Colonic mucosa (tissue), 4 donors: ENCODE measurements at regions of chr5 and their contacts with region 1.

Region 1: DNA sequence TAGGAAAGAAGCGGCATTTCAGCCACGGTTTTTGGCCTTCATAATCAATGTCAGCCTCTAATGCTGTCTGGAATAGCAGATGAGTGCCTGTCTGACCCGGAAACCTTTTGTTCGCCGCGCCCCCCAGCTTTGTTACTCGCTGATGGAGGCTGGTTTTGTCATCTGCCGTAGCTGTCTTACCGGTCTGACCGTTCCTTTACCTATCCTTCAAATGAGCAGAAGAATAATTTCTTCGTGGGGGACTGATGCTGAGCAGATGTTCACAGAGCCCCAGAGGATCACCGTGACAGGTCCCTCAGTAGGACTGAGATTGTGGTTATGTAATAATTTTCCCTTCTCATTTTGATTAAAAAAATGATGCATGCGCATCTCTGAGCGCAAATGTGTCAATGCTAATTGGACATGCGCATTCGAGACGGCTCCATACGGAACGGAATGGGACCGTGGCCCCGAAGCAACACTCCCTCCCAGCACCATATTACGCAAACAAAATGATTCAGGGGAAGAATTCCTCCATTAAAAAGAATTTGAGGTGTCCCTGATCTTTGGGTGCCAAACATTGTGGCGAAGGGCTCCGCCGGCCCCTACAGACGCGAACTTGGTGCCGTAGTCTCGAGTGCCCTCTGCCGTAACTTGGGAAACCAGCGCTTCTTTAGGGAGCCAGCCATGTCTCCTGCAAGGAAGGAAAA is 27.6 kb downstream of the TLX3 start:
- DNase-seq: no peak
- H3K4me3 ChIP-seq: peak overlapping the region; percentile 34
- H3K27ac ChIP-seq: no peak overlapping the region
- H3K4me1 ChIP-seq: no peaks in the 10 kb centered on the region
- H3K27me3 ChIP-seq: peaks cover 9% of the 10 kb centered on the region
- CTCF ChIP-seq: peak; percentile 33

Region 2: DNA sequence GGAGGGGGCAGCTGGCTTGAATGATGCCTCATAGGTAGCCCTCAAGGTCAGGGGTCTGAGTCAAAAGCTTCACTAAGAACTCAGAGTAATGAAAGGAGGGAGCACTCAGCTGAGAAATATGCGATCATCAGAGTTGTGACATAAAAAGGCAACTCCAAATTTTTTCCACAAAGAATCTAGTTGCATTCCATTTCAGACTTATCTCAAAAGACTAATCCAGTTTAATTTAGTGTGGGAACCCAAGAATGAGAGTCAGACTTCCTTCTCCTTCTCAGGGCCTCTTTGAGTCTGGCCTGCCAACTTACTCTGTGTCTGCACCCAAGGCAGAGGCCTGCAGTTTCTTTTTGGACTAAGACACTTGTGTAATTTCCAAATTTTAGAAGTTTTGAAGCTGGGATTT is 518.4 kb before region 1 on chr5:
- intact Hi-C with region 1: no loop called
- DNase-seq: no peak
- H3K4me3 ChIP-seq: no peak overlapping the region
- H3K27ac ChIP-seq: no peak overlapping the region
- H3K4me1 ChIP-seq: no peaks in the 10 kb centered on the region
- H3K27me3 ChIP-seq: no peaks in the 10 kb centered on the region
- CTCF ChIP-seq: no peak

Region 3: DNA sequence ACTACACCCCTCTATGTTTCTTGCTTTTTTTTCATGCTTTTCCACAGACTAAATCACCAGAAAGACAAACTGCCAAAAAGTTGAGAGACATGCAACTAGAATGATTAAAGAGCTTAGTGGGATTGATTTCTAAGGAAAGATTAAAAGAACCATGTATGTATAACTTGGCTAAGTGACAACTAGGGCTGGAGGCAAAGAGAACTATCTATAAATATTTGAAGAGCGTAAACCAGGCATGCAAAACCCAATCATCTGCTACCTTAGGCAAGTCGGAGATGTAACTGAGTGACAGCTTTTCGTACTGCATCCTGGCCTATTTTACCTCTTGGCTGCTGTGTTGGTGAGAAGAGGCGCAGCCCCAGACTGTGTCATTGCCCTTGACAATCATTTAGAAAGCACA is 148.6 kb before region 1 on chr5:
- intact Hi-C with region 1: no loop called
- DNase-seq: no peak
- H3K4me3 ChIP-seq: no peak overlapping the region
- H3K27ac ChIP-seq: no peak overlapping the region
- H3K4me1 ChIP-seq: no peaks in the 10 kb centered on the region
- H3K27me3 ChIP-seq: no peaks in the 10 kb centered on the region
- CTCF ChIP-seq: no peak

Region 4: DNA sequence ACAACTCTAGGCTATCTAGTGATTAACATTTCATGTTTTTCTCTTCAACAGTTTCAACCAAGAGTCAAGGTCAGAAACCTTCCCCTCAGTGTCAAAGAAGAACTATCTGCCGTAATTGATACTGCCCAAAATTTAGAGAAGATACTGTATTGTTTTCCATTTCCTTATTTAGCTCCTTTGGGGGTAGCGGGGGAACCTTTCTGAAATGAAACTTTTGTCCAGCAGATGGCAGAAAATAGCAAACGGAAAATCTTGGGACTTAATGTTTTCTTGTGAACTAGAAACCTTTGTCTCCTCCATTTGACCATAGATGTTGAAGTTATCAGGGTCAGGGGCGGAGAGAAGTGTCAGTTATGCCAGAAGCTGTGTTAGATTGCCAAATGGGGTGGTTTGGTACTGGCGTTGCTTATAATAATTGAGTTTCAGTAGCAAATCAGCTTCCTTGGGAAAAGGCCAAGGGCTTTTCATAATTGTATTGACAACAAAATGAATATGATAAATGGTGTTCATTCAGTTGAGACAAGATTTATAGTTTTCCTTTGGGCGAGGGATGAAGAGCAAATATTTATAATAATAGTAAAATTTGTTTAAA is 129.3 kb before region 1 on chr5:
- intact Hi-C with region 1: loop called (anchors 5 kb)
- DNase-seq: no peak
- H3K4me3 ChIP-seq: no peak overlapping the region
- H3K27ac ChIP-seq: no peak overlapping the region
- H3K4me1 ChIP-seq: no peaks in the 10 kb centered on the region
- H3K27me3 ChIP-seq: no peaks in the 10 kb centered on the region
- CTCF ChIP-seq: peak; percentile 37

Region 5: DNA sequence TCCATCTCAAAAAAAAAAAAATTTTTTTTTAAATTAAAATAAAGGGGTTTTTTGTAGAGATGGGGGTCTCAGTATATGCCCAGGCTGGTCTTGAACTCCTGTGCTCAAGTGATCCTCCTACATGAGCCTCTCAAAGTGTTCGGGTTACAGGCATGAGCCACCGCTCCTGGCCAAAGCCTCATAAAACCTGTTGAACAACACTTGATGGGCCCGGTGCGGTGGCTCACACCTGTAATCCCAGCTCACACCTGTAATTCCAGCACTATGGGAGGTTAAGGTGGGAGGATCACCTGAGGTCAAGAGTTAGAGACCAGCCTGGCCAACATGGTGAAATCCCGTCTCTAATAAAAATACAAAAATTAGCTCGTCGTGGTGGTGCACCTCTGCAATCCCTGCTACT is 43.3 kb after region 1 on chr5:
- intact Hi-C with region 1: no loop called
- DNase-seq: no peak
- H3K4me3 ChIP-seq: no peak overlapping the region
- H3K27ac ChIP-seq: no peak overlapping the region
- H3K4me1 ChIP-seq: no peaks in the 10 kb centered on the region
- H3K27me3 ChIP-seq: no peaks in the 10 kb centered on the region
- CTCF ChIP-seq: no peak

Region 6: GRCh38 chr5:171415115-171415730 is 78.6 kb after region 1 on chr5:
- intact Hi-C with region 1: no loop called
- DNase-seq: no peak
- H3K4me3 ChIP-seq: no peak overlapping the region
- H3K27ac ChIP-seq: no peak overlapping the region
- H3K4me1 ChIP-seq: peaks cover 7% of the 10 kb centered on the region
- H3K27me3 ChIP-seq: peaks cover 11% of the 10 kb centered on the region
- CTCF ChIP-seq: no peak